Caco-2 (cell line): ENCODE measurements at regions of chr1 and their contacts with region 1.

Region 1: DNA sequence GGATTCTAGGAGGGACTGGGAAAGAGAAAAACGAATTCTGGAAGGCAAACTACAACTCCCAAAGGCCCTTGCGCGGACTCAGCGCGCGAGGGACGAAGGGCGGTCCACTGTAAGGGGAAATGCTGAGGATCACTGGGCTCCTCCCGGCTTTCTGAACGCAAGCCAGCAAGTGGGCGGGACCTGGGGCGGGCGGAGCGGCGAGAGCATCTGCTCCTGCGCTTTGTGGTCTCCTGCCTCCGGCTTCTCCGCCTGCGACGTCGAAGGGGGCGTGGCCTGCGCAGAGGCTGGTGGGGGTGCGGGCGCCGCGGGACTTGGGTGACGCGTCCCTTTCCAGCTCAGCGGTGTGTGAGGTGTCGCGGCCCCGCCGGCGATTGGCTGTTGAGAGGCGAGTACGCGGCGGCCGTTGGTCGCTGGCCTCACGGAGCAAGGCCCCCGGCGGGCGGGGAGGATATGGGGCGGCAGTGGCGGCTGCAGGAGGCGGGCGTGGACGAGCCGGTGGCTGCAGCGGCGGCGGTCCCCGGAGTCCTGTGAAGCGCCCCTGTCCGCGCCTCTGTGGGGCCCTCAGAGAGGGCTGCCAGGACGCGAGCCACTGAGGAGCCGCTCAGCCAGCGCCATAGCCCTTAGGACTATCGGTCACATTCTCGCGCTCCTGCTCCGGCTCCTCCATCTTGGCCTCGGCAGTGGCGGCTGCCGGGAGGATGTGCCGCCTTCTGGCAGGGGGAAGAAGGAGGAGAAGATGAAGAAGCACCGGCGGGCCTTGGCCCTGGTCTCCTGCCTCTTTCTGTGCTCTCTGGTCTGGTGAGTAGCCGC is at the start of gene SUCO:
- DNase-seq: peak; percentile 100
- H3K4me3 ChIP-seq: peak within 1 kb of the TSS; percentile 69
- H3K4me3 Mint-ChIP-seq: peak within 1 kb of the TSS; percentile 87
- H3K27ac Mint-ChIP-seq: peak within 1 kb of the TSS; percentile 84
- H3K4me1 ChIP-seq: peaks cover 32% of the 10 kb centered on the region
- H3K4me1 Mint-ChIP-seq: peaks cover 47% of the 10 kb centered on the region
- H3K27me3 ChIP-seq: no peaks in the 10 kb centered on the region
- H3K27me3 Mint-ChIP-seq: no peaks in the 10 kb centered on the region
- CTCF ChIP-seq: peak in 1 of 2 experiments; percentile 20
- total RNA-seq, gene SUCO: 48.4 and 50.3 TPM in 2 replicates

Region 2: GRCh38 chr1:171781176-171781875 is 751.6 kb before region 1 on chr1 and contains the start of gene METTL13:
- CTCF ChIA-PET with region 1: no interaction called
- POLR2A ChIA-PET with region 1: interaction called, 3 read pairs
- intact Hi-C with region 1: loop called (anchors 1 kb)
- DNase-seq: peak; percentile 99
- H3K4me3 ChIP-seq: peak within 1 kb of the TSS; percentile 97
- H3K4me3 Mint-ChIP-seq: peak within 1 kb of the TSS; percentile 91
- H3K27ac Mint-ChIP-seq: peak within 1 kb of the TSS; percentile 97
- H3K4me1 ChIP-seq: no peaks in the 10 kb centered on the region; the same call in 1 of the 2 replicates
- H3K4me1 Mint-ChIP-seq: peaks cover 6% of the 10 kb centered on the region
- H3K27me3 ChIP-seq: no peaks in the 10 kb centered on the region
- H3K27me3 Mint-ChIP-seq: no peaks in the 10 kb centered on the region
- CTCF ChIP-seq: no peak
- total RNA-seq, gene METTL13: 36.9 and 40.4 TPM in 2 replicates

Region 3: DNA sequence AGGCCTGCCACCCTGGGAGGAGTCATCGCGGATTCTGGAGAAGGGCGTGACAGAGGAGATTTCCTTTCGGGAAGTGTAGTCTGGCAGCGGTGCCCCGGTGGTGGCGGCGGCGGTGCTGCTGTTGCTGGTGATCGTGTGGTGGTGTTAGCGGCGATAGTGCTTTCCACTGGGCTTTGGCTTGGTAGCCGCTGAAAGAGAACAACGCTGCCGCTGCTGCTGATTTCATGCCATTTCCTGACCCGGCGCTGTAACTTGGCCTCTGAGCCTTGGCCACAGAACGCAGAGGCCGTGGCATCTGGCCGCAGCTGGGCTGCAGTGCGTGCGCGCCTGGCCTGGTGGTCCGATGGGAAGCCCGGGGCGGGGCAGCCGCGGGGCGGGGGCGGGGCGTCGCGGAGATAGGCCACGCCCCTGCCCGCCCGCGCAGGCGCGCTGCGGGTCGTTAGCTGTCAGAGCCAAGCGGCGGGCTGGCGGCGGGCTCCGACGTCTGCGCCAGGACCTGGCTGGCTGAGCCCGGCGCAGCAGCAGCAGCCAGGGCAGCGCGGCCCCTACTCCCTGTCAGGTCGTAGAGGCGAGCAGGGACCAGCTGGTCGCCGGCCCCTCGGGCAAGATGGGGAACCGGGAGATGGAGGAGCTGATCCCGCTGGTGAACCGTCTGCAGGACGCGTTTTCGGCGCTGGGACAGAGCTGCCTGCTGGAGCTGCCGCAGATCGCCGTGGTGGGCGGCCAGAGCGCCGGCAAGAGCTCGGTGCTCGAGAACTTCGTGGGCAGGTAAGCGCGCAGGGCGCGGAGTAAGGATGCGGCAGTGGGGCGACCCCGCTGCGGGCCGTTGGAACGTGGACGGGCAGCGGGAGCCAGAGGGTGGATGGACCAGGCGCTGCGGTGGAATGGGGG is 691.6 kb before region 1 on chr1 and contains the start of gene DNM3:
- CTCF ChIA-PET with region 1: no interaction called
- POLR2A ChIA-PET with region 1: no interaction called
- intact Hi-C with region 1: loop called (anchors 5 kb)
- DNase-seq: peak; percentile 50 to 77
- H3K4me3 ChIP-seq: peak within 1 kb of the TSS; percentile 58
- H3K4me3 Mint-ChIP-seq: peak within 1 kb of the TSS; percentile 82
- H3K27ac Mint-ChIP-seq: no peak within 1 kb of the TSS
- H3K4me1 ChIP-seq: no peaks in the 10 kb centered on the region; the same call in 1 of the 2 replicates
- H3K4me1 Mint-ChIP-seq: peaks cover 13% of the 10 kb centered on the region
- H3K27me3 ChIP-seq: peaks cover 3% of the 10 kb centered on the region
- H3K27me3 Mint-ChIP-seq: peaks cover 30% of the 10 kb centered on the region
- CTCF ChIP-seq: no peak
- total RNA-seq, gene DNM3: 0.11 TPM in 1 of 2 replicates, not detected in the other

Region 4: GRCh38 chr1:172469717-172470116 is 63.2 kb before region 1 on chr1:
- CTCF ChIA-PET with region 1: no interaction called
- POLR2A ChIA-PET with region 1: interaction called, 5 read pairs
- intact Hi-C with region 1: loop called (anchors 1 kb)
- DNase-seq: peak; percentile 65 to 73
- H3K4me3 ChIP-seq: no peak overlapping the region
- H3K4me3 Mint-ChIP-seq: peak overlapping the region; percentile 62
- H3K27ac Mint-ChIP-seq: peak overlapping the region; percentile 94
- H3K4me1 ChIP-seq: peaks cover 74% of the 10 kb centered on the region
- H3K4me1 Mint-ChIP-seq: peaks cover 55% of the 10 kb centered on the region
- H3K27me3 ChIP-seq: no peaks in the 10 kb centered on the region
- H3K27me3 Mint-ChIP-seq: no peaks in the 10 kb centered on the region
- CTCF ChIP-seq: no peak

Region 5: GRCh38 chr1:172499636-172500141 is 33.2 kb before region 1 on chr1:
- CTCF ChIA-PET with region 1: interaction called, 3 read pairs
- POLR2A ChIA-PET with region 1: interaction called, 6 read pairs
- intact Hi-C with region 1: loop called (anchors 2 kb)
- DNase-seq: peak; percentile 69 to 86
- H3K4me3 ChIP-seq: no peak overlapping the region
- H3K4me3 Mint-ChIP-seq: no peak overlapping the region
- H3K27ac Mint-ChIP-seq: peak overlapping the region; percentile 33
- H3K4me1 ChIP-seq: peaks cover 44% of the 10 kb centered on the region
- H3K4me1 Mint-ChIP-seq: peaks cover 22% of the 10 kb centered on the region
- H3K27me3 ChIP-seq: no peaks in the 10 kb centered on the region
- H3K27me3 Mint-ChIP-seq: no peaks in the 10 kb centered on the region
- CTCF ChIP-seq: no peak